ENCODE measurements at regions of chr13 and their contacts with region 1.

Region 1: DNA sequence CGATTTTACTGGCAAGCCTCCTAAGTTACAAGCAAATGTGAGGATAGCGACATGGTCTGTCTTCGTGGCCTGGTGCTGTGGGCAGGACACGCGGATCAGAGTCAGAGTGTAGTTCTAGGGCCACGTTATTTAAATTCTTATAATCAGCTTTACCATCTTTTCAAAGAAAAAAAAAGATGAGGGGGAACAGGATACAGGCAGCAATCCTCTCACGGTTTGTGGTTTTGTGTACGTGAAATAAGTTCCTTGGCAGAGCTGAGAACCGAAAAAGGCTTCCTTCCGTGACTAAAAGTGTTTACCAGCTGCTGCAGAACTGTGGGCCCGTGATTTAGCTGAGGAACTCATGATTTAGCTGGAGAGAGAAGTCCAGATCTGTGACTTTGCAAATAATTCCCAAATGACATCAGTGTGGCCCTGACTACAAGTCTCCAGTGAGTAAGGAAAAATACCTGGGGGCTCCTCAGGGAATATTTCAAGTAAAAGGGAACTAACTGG is 27.2 kb downstream of the RCBTB2 start:
- DNase-seq: peak; percentile 85
- ATAC-seq: peak; percentile 84
- H3K4me3 ChIP-seq: peak overlapping the region in 2 of 5 experiments; percentile 30 to 32
- H3K4me3 Mint-ChIP-seq: peak overlapping the region; percentile 82
- H3K27ac ChIP-seq: no peak overlapping the region
- H3K27ac Mint-ChIP-seq: peak overlapping the region; percentile 84
- H3K4me1 ChIP-seq: peaks cover 36 to 37% of the 10 kb centered on the region in 2 donors
- H3K4me1 Mint-ChIP-seq: peaks cover 49% of the 10 kb centered on the region
- H3K27me3 ChIP-seq: peaks cover 0 to 49% (median 7%) of the 10 kb centered on the region in 4 experiments
- H3K27me3 Mint-ChIP-seq: peaks cover 33% of the 10 kb centered on the region
- CTCF ChIP-seq: no peak

Region 2: DNA sequence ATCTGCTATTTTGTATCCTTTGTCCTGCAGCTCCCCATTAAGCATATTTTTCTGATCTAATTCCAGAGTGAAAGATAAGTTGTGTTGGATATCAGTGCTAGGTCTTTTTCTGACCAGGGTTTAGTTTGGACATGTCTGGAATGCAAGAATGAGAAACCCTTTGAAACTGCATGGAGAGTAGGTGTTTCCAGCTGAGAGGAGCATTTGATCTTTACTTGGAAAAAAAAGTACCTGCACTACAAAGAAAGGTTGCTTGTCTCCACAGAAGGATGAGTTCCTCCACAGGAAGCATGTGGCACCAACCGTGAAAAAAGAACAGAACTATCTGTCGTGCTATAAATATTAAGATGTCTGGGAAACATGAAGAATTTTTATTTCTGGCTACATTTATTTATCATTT is 374.1 kb before region 1 on chr13:
- CTCF ChIA-PET with region 1: no interaction called
- POLR2A ChIA-PET with region 1: no interaction called
- intact Hi-C with region 1: no loop called
- DNase-seq: no peak
- ATAC-seq: no peak
- H3K4me3 ChIP-seq: no peak overlapping the region
- H3K4me3 Mint-ChIP-seq: no peak overlapping the region
- H3K27ac ChIP-seq: no peak overlapping the region
- H3K27ac Mint-ChIP-seq: no peak overlapping the region
- H3K4me1 ChIP-seq: peaks cover 10 to 12% of the 10 kb centered on the region in 2 donors
- H3K4me1 Mint-ChIP-seq: peaks cover 7% of the 10 kb centered on the region
- H3K27me3 ChIP-seq: peaks cover 0 to 5% (median 0%) of the 10 kb centered on the region in 4 experiments
- H3K27me3 Mint-ChIP-seq: peaks cover 13% of the 10 kb centered on the region
- CTCF ChIP-seq: no peak

Region 3: GRCh38 chr13:48175185-48175584 is 330.5 kb before region 1 on chr13:
- CTCF ChIA-PET with region 1: no interaction called
- POLR2A ChIA-PET with region 1: no interaction called
- intact Hi-C with region 1: no loop called
- DNase-seq: no peak
- ATAC-seq: peak; percentile 43
- H3K4me3 ChIP-seq: no peak overlapping the region
- H3K4me3 Mint-ChIP-seq: no peak overlapping the region
- H3K27ac ChIP-seq: no peak overlapping the region
- H3K27ac Mint-ChIP-seq: no peak overlapping the region
- H3K4me1 ChIP-seq: peaks cover 0 to 8% of the 10 kb centered on the region in 2 donors
- H3K4me1 Mint-ChIP-seq: peaks cover 6% of the 10 kb centered on the region
- H3K27me3 ChIP-seq: no peaks in the 10 kb centered on the region
- H3K27me3 Mint-ChIP-seq: no peaks in the 10 kb centered on the region
- CTCF ChIP-seq: no peak

Region 4: GRCh38 chr13:48437371-48437770 is 68.3 kb before region 1 on chr13:
- CTCF ChIA-PET with region 1: no interaction called
- POLR2A ChIA-PET with region 1: no interaction called
- intact Hi-C with region 1: no loop called
- DNase-seq: no peak
- ATAC-seq: no peak
- H3K4me3 ChIP-seq: no peak overlapping the region
- H3K4me3 Mint-ChIP-seq: no peak overlapping the region
- H3K27ac ChIP-seq: no peak overlapping the region
- H3K27ac Mint-ChIP-seq: no peak overlapping the region
- H3K4me1 ChIP-seq: peaks cover 6 to 15% of the 10 kb centered on the region in 2 donors
- H3K4me1 Mint-ChIP-seq: peaks cover 23% of the 10 kb centered on the region
- H3K27me3 ChIP-seq: no peaks in the 10 kb centered on the region
- H3K27me3 Mint-ChIP-seq: no peaks in the 10 kb centered on the region
- CTCF ChIP-seq: no peak

Region 5: GRCh38 chr13:48492470-48493065 is 13.1 kb before region 1 on chr13:
- CTCF ChIA-PET with region 1: interaction called, 4 read pairs
- POLR2A ChIA-PET with region 1: no interaction called
- intact Hi-C with region 1: loop called (anchors 1 kb)
- DNase-seq: peak; percentile 91
- ATAC-seq: peak; percentile 86
- H3K4me3 ChIP-seq: peak overlapping the region; percentile 10 to 65 (median 32)
- H3K4me3 Mint-ChIP-seq: no peak overlapping the region
- H3K27ac ChIP-seq: peak overlapping the region; percentile 63 to 66
- H3K27ac Mint-ChIP-seq: no peak overlapping the region
- H3K4me1 ChIP-seq: peaks cover 57% of the 10 kb centered on the region in 2 donors
- H3K4me1 Mint-ChIP-seq: peaks cover 38% of the 10 kb centered on the region
- H3K27me3 ChIP-seq: no peaks in the 10 kb centered on the region
- H3K27me3 Mint-ChIP-seq: no peaks in the 10 kb centered on the region
- CTCF ChIP-seq: no peak

Region 6: DNA sequence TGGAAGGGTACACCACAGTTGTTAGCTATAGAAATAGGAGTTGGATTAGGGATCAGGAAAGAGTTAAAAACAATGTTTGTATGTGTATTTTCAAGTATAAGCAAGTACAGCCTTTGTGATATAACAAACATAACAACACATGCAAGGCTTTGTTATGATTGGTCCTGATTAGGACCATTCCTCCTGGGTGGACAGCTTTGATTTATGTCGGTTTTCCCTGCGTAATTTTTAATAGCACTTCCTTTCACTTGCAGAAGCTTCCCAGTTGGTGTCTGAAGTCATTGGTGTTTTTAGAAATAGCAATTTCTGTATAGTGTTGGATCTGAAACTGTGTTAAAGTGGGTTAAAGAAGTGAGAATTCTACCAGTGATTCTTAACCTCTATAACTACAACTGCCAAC is 480.1 kb after region 1 on chr13:
- CTCF ChIA-PET with region 1: no interaction called
- POLR2A ChIA-PET with region 1: no interaction called
- intact Hi-C with region 1: no loop called
- DNase-seq: no peak
- ATAC-seq: no peak
- H3K4me3 ChIP-seq: no peak overlapping the region
- H3K4me3 Mint-ChIP-seq: no peak overlapping the region
- H3K27ac ChIP-seq: no peak overlapping the region
- H3K27ac Mint-ChIP-seq: no peak overlapping the region
- H3K4me1 ChIP-seq: peaks cover under 1 to 4% of the 10 kb centered on the region in 2 donors
- H3K4me1 Mint-ChIP-seq: peaks cover 20% of the 10 kb centered on the region
- H3K27me3 ChIP-seq: no peaks in the 10 kb centered on the region
- H3K27me3 Mint-ChIP-seq: no peaks in the 10 kb centered on the region
- CTCF ChIP-seq: no peak

Measured in B cell (primary cell).